HEK293 (cell line): ENCODE measurements at regions of chr6 and their contacts with region 1.

Region 1: GRCh38 chr6:118968416-118968815 is 33.5 kb upstream of the MCM9 start:
- H3K4me3 ChIP-seq: no peak overlapping the region
- H3K27ac ChIP-seq: no peak overlapping the region
- H3K4me1 ChIP-seq: no peaks in the 10 kb centered on the region
- CTCF ChIP-seq: no peak

Region 2: DNA sequence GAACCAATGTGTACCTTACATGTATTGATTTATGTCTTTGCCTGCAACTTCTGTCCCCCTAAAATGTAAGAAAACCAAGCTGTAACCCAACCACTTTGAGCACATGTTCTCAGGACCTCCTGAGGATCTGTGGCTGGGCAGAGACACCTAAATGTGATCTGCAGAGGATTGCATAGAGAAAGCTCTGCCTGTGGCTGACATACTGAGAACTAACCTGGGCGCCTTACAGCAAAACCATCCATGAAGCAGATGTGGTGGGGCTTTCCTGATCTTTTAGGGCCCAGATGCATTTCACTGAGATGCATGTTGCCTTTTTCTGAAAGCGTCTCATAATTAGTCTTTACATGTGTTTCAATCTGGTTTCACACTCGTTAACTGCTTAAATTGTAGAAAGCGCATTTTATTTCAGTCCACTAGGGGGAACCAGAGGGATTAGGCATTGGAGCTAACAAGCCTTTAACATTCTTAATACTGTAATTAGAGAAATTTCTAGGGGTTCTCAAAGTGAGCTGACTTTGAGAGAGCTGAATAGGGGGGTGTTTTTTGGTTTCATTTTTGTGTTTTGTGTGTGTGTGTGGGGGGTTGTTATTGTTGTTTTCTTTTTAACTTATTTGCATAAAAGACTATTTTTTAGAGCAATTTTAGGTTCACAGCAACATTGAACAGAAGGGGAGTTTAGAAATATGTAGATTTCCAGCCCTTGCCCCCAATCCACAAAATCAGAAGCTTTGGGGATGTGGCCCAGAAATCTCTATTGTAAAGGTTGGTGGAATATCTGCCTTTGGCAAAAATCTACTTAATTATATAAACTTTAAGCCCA is 160.9 kb after region 1 on chr6:
- CTCF ChIA-PET with region 1: interaction called, 11 read pairs
- POLR2A ChIA-PET with region 1: no interaction called
- H3K4me3 ChIP-seq: no peak overlapping the region
- H3K27ac ChIP-seq: no peak overlapping the region
- H3K4me1 ChIP-seq: peaks cover 4% of the 10 kb centered on the region
- CTCF ChIP-seq: peak; percentile 57

Region 3: GRCh38 chr6:119476554-119476953 is 508.1 kb after region 1 on chr6:
- CTCF ChIA-PET with region 1: no interaction called
- POLR2A ChIA-PET with region 1: no interaction called
- H3K4me3 ChIP-seq: no peak overlapping the region
- H3K27ac ChIP-seq: no peak overlapping the region
- H3K4me1 ChIP-seq: 0 out of 2 replicates have a peak, but pooled peaks cover 2% of the 10 kb centered on the region
- CTCF ChIP-seq: no peak